ENCODE measurements at regions of chr1 and their contacts with region 1.

Region 1: GRCh38 chr1:202122639-202123335 is at the start of gene GPR37L1:
- DNase-seq: no peak
- CTCF ChIP-seq: no peak

Region 2: DNA sequence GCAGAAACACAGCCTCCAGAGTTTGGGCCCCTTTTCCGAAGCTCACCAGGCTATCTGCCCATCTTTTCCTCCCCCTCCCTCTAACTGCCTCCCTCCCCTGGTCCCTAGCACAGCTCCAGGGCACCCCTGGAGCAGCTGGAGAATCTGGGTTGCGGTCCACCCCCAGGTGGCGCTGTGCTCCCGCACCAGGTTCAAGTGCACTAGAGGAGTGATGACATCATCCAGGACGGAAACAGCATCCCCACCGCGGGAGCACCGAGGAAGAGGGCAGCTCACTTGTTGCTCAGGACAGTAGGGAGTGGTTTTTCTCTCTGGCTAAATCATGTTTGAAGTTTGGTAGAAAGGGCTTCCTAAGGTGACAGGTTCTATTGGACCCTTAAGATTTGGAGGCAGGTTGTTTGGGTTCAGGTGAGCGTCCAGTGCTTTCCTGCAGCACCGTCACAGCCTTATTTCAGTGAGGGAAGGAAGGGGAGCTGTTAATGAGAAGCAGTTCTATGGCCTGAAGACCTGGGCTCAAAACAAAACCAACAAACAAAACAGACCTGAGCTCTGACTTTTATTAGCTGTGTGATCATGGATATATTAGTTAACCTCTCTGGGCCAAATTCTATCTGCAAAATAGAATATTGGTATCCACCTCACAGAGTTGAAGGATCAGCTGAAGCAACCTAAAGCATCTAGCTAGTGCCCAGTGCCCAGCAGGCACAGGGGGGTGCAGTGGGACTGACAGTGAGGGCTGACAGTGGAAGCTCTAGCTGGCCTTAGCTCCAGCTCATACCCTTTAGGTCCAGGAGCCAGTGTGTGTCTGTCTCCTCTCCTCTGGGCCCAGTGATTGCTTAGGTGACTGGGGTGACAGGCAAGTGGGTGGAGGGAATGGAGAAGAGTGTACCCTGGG is 226.6 kb before region 1 on chr1:
- in situ Hi-C with region 1: loop called (anchors 25 kb)
- DNase-seq: peak; percentile 91
- CTCF ChIP-seq: peak; percentile 89

Region 3: GRCh38 chr1:201999625-202000238 is 123.1 kb before region 1 on chr1:
- in situ Hi-C with region 1: loop called (anchors 5 kb)
- DNase-seq: peak; percentile 71
- CTCF ChIP-seq: peak; percentile 57

Region 4: DNA sequence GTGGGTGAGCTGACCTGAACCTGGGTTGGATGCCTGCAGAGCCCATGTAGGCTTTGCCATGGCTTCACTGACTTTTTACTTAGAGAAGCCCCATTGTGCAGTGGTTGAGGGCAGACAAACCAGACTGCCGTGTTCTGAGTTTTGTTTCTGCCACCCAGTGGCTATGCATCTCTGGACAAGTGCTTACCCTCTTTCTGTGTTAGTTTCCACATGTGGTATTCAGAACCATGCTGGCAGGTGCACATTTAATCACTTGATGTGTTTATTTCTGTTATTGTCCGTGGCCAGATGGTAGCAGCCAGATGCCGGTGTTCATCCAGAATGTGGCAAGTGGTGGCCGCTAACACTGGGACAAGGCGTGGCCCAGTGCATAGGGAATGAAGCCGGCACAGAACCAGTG is 47.9 kb after region 1 on chr1:
- in situ Hi-C with region 1: no loop called
- DNase-seq: no peak
- CTCF ChIP-seq: no peak

Measured in GM13976 (cell line).